Activated CD4-positive, alpha-beta T cell treated with anti-CD3 and anti-CD28 coated beads, Interleukin-2, amount 10 ng/mL, durations not matched to agents 24 days and 14 days (primary cell): ENCODE measurements at regions of chr19 and their contacts with region 1.

Region 1: GRCh38 chr19:36772311-36773222 is at the start of gene ZNF850:
- DNase-seq: peak; percentile 98
- H3K4me3 Mint-ChIP-seq: peak within 1 kb of the TSS; percentile 95
- H3K27ac Mint-ChIP-seq: peak within 1 kb of the TSS; percentile 89
- H3K4me1 Mint-ChIP-seq: peaks cover 21% of the 10 kb centered on the region
- H3K27me3 Mint-ChIP-seq: no peaks in the 10 kb centered on the region
- total RNA-seq, gene ZNF850: 3.2 and 3.8 TPM in 2 replicates

Region 2: DNA sequence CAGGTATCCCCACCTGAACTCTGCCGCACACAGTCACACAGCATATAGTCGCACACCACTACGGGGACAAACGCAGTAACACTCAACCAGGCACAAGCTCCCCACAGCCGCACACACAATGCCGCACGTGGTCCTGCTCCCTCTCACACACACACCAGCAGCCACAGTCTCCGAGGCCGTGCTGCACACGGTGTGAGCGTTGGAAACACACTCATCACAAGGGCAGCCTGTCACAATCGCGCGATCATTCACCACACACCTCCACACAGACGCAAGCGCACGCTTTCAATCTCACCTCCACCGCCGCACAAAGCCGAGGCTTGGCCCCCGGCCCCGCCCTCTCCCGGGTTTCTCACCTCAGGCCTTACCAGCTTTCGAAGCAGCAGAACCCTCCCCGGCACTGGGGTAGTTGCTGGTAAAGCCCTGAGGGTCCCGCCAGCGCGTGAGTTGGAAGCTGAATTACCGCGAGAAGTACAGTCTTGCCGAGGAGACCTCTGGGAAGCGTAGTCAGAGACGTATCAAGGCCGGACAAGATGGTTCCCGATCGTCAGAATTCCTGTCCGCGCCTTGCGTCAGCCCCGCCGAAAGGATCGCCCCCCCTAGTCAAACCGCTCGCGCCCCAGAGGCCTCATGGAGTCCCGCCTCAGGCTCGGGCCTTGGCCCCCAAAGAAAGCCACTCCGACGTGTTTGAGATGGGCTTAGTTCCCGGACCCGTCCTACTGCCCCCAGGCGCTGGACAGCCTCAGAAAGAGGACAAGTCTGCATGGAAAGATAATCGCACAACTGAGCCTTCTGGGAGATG is 283.2 kb before region 1 on chr19 and contains the start of gene ZNF566:
- intact Hi-C with region 1: loop called (anchors 1 kb)
- DNase-seq: peak; percentile 97
- H3K4me3 Mint-ChIP-seq: peak within 1 kb of the TSS; percentile 99
- H3K27ac Mint-ChIP-seq: peak within 1 kb of the TSS; percentile 99
- H3K4me1 Mint-ChIP-seq: peaks cover 23% of the 10 kb centered on the region
- H3K27me3 Mint-ChIP-seq: no peaks in the 10 kb centered on the region
- total RNA-seq, gene ZNF566: 7.2 and 8.5 TPM in 2 replicates

Region 3: DNA sequence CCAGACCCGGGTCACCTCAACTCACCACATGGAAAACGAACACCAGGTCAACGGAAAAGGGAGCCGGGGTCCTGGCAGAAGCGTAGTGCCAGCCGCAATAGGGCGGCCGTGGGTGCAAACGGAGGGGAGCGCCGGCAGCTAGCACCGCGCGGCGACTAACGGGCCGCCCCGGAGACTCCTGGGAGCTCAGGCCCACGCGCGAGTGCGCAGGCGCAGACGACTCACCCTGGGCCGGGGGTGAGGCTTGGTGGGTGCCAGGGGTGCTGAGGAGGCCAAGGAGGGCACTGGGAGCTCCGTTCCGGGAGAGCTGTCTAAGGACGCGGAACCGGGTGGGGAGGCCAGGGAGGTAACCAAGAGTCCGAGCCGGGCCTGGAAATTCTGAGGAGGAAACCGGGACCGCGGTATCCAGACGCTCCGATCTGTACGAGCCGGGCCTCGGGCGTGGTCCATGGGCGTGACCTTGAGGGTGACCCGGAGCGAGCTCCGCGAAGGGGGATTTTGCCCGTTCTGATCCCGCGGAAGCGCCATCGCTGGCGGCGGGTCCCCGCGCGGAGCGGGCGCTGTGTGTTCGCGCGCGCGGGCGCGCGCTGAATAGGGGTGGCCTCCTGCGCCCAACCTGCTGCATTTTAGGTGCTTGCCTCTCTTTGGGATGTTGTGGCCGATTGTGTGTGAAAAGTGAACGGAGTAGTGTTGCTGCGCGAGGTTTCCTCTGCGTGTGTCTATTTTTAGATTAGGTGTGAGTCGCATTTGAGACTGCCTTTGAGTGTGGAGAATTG is 167.3 kb before region 1 on chr19 and contains the start of gene ZNF382:
- intact Hi-C with region 1: loop called (anchors 2 kb)
- DNase-seq: peak; percentile 96
- H3K4me3 Mint-ChIP-seq: peak within 1 kb of the TSS; percentile 89
- H3K27ac Mint-ChIP-seq: peak within 1 kb of the TSS; percentile 98
- H3K4me1 Mint-ChIP-seq: peaks cover 22% of the 10 kb centered on the region
- H3K27me3 Mint-ChIP-seq: no peaks in the 10 kb centered on the region
- total RNA-seq, gene ZNF382: 9.5 and 13.2 TPM in 2 replicates

Region 4: GRCh38 chr19:36797786-36798108 is 25.2 kb after region 1 on chr19:
- intact Hi-C with region 1: loop called (anchors 1 kb)
- DNase-seq: no peak
- H3K4me3 Mint-ChIP-seq: peak overlapping the region; percentile 88
- H3K27ac Mint-ChIP-seq: peak overlapping the region; percentile 91
- H3K4me1 Mint-ChIP-seq: peaks cover 3% of the 10 kb centered on the region
- H3K27me3 Mint-ChIP-seq: no peaks in the 10 kb centered on the region

Region 5: DNA sequence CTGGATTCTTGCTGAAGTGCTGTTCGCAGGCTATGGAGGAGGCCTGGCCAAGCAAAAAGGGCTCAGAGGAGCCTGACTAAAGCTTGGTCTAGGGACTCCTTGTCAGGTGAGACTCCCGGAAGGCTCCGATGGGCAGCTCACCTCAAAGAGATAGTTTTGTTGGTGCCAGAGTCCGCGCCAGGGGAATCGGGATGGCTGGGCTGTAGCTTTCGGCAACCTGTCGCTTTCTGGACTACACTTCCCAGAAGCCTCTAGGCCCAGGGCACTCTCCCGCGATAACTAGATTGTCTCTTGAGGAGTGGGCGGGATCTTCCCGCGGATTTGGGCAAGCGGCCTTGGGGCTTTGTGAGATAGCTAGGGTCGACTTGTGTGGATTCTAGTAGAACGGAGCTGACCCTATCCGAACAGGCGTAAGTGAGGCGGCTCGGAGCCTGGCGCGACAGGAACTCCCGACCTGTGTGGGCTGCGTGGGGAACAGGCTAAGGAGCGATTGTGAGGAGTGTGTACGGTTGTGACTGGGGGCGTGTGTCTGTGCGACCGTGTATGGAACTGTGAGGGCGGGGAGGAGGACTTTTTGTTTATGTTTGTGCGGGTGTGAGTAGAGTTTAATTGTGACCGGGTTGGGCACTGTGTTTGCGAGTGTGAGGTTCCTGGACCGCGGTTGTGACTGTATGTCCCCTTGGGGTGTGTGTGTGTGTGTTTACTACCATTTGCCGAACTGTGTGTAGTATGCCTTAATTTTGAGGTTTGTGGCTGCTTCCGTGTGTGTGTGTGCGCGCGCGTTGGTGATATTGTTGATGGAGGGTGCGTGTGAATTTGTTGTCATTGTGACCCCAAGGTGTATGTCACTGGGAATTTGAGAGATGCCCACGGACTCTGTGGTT is 78.2 kb after region 1 on chr19 and contains the start of gene ZNF345:
- intact Hi-C with region 1: loop called (anchors 1 kb)
- DNase-seq: peak; percentile 96
- H3K4me3 Mint-ChIP-seq: no peak within 1 kb of the TSS
- H3K27ac Mint-ChIP-seq: no peak within 1 kb of the TSS
- H3K4me1 Mint-ChIP-seq: peaks cover 2% of the 10 kb centered on the region
- H3K27me3 Mint-ChIP-seq: no peaks in the 10 kb centered on the region
- total RNA-seq, gene ZNF345: 2.8 and 4.2 TPM in 2 replicates

Region 6: GRCh38 chr19:36973021-36973843 is 200.7 kb after region 1 on chr19:
- intact Hi-C with region 1: loop called (anchors 2 kb)
- DNase-seq: peak; percentile 92
- H3K4me3 Mint-ChIP-seq: peak overlapping the region; percentile 99
- H3K27ac Mint-ChIP-seq: peak overlapping the region; percentile 92
- H3K4me1 Mint-ChIP-seq: peaks cover 12% of the 10 kb centered on the region
- H3K27me3 Mint-ChIP-seq: no peaks in the 10 kb centered on the region